ENCODE measurements at regions of chr20 and their contacts with region 1.

Region 1: GRCh38 chr20:64079273-64080012 is at the start of gene RGS19:
- DNase-seq: peak; percentile 75
- ATAC-seq: peak; percentile 40
- H3K4me3 Mint-ChIP-seq: peak within 1 kb of the TSS; percentile 80
- H3K27ac Mint-ChIP-seq: no peak within 1 kb of the TSS
- H3K4me1 Mint-ChIP-seq: peaks cover 29% of the 10 kb centered on the region
- H3K27me3 Mint-ChIP-seq: peaks cover 35% of the 10 kb centered on the region
- CTCF ChIP-seq: no peak
- total RNA-seq, gene RGS19: 13.8 to 15.9 TPM (median 15.1 TPM) in 3 replicates

Region 2: DNA sequence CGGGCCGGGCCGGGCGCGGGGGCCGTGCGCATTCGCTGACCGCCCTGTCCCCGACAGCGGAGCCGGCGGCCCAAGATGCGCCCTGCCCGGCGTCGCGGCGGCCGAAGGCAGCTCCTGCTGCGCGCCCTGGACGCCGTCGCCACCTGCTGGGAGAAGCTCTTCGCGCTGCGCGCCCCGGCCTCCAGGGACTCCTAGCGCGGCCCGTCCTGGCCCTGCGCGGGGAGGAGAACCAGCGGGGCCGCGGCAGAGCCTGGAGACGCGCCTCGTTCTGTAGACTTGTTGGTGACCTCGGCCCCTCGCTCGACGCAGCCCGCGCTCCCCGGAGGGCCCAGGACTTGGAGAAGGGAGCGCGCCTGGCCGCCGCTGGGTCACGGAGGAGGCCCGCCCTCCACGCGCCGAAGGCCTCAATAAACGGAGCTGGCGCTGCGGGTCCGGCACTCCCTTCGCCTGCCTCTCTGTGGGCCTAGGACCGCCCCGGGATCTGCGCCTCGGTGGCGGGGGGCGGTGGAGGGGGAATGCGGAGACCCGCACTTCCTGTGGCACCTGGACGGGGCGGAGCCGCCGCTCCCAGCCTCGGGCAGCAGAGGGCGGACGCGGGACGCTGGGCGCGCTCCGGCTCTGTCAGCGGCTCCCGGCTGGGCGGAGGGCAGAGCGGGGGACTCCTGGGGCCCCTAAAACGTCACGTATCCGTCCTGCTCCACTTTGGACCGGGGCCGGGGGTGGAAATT is 40.7 kb before region 1 on chr20:
- CTCF ChIA-PET with region 1: interaction called, 35 read pairs
- POLR2A ChIA-PET with region 1: no interaction called
- DNase-seq: peak; percentile 89
- ATAC-seq: peak; percentile 68
- H3K4me3 Mint-ChIP-seq: peak overlapping the region; percentile 54
- H3K27ac Mint-ChIP-seq: no peak overlapping the region
- H3K4me1 Mint-ChIP-seq: peaks cover 28% of the 10 kb centered on the region
- H3K27me3 Mint-ChIP-seq: peaks cover 43% of the 10 kb centered on the region
- CTCF ChIP-seq: peak; percentile 58

Region 3: GRCh38 chr20:64053841-64054661 is 25.4 kb before region 1 on chr20:
- CTCF ChIA-PET with region 1: interaction called, 17 read pairs
- POLR2A ChIA-PET with region 1: no interaction called
- DNase-seq: peak; percentile 56
- ATAC-seq: peak; percentile 20
- H3K4me3 Mint-ChIP-seq: no peak overlapping the region
- H3K27ac Mint-ChIP-seq: peak overlapping the region; percentile 74; the same call in 1 of the 2 replicates
- H3K4me1 Mint-ChIP-seq: peaks cover 22% of the 10 kb centered on the region
- H3K27me3 Mint-ChIP-seq: peaks cover 24% of the 10 kb centered on the region
- CTCF ChIP-seq: no peak

Region 4: DNA sequence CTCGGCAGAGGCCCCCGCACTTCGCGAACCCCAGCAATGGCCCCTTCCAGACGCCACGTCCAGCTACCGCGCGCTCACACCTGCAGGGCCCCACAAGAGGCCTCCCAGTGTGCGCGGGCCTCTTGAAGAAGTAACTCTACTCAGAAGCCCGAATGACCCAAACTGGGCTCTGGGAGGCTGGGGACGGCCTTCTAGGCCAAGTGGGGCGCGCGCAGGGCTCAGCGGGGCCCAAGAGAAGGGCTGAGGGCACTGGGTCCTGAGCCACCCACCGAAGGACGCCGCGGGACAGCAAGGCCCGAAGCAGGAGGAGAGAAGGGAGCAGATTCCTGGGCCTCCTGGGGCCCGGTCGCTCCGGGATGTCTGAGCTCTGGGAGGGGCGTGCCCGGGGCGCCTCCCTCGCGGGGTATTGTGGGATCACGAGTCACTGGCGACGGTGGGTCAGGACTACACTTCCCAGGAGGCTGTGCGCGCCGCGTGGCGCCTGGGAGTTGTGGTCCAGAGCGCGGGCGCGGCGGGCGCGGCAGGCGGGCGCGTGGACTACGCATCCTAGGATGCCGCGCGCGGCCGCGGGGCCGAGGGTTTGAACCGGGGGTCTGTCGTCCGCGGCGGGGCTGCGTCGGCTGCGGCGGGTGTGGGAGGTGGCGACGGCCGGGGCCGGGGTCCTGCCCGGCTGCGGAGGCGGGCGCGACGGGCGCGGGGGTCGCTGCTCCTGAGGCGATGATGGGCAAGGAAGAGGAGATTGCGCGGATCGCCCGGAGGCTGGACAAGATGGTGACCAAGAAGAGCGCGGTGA is 16.7 kb before region 1 on chr20 and contains the start of gene TCEA2:
- CTCF ChIA-PET with region 1: interaction called, 16 read pairs
- POLR2A ChIA-PET with region 1: interaction called, 4 read pairs
- DNase-seq: peak; percentile 95
- ATAC-seq: peak; percentile 84
- H3K4me3 Mint-ChIP-seq: peak within 1 kb of the TSS; percentile 82
- H3K27ac Mint-ChIP-seq: no peak within 1 kb of the TSS; the same call in 1 of the 2 replicates
- H3K4me1 Mint-ChIP-seq: peaks cover 31% of the 10 kb centered on the region
- H3K27me3 Mint-ChIP-seq: peaks cover 7% of the 10 kb centered on the region
- CTCF ChIP-seq: no peak
- total RNA-seq, gene TCEA2: 55.8 to 63.6 TPM (median 63.5 TPM) in 3 replicates

Region 5: DNA sequence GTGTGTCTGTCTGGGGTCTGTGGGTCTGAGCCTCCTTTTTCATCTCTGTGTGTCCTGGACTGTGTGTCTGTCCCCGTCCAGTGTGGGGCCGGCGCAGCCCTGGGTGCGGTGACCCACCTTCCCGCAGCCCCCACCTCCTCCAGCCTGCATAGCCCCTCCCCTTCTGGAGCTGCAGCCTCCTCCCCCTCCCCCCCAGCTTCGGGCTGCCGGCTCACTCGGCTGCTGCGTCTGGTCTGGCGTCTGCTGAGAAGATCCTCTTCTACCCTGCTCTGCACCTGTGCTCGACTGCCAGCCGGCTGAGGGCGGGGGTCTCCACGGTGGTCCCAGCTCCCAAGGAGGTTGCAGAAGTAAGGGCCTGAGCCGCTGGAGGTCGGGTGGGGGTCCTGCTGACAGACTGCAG is 12.3 kb after region 1 on chr20:
- CTCF ChIA-PET with region 1: interaction called, 12 read pairs
- POLR2A ChIA-PET with region 1: no interaction called
- DNase-seq: no peak
- ATAC-seq: peak; percentile 78
- H3K4me3 Mint-ChIP-seq: no peak overlapping the region
- H3K27ac Mint-ChIP-seq: no peak overlapping the region
- H3K4me1 Mint-ChIP-seq: peaks cover 7% of the 10 kb centered on the region
- H3K27me3 Mint-ChIP-seq: peaks cover 11% of the 10 kb centered on the region; the same call in 1 of the 2 replicates
- CTCF ChIP-seq: no peak

Region 6: DNA sequence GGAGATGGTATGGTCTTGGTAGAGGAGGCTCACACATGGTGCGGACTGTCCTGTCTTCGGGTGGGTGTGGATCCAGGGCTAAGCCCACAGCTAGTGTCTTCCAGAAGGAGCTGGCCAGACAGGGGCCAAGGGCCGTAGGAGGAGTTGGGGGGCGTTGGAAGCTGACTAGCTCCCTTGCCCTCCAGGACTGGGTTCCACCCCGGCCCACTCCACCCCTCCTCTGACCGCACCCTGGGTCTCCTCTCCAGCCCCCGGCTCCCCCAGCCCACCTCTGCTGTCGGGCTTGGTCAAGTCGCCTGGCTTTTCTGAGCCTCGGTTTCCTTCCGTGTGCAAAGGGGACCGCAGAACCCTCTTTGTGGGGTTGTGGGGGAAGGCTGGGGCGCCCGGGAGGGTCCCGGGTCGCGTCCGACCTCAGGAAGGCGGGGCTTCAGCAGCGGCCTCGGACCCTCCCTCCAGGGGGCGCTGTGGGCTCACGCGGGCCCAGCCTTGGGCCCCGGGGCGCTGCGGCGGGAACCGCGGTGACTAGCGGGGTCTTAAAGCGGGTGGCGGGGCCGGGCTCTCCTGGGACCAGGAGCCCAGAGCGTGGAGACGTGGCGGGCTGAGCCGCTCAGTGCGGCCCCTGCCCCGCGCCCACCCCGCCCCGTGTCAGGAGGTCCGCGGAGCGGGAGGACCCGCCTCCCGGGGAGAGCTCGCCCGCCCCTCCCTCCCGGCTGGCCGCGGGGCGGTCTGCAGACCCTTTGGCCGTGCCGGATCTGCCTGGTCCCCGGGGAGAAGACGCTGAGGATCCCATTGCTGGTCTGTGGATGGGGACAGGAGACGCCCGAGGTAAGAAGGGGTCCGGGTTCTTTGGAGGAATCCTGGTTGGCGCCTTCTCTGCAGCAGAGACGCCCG is 22.5 kb after region 1 on chr20:
- CTCF ChIA-PET with region 1: interaction called, 77 read pairs
- POLR2A ChIA-PET with region 1: no interaction called
- DNase-seq: peak; percentile 79
- ATAC-seq: peak; percentile 82
- H3K4me3 Mint-ChIP-seq: peak overlapping the region; percentile 74
- H3K27ac Mint-ChIP-seq: no peak overlapping the region
- H3K4me1 Mint-ChIP-seq: peaks cover 8% of the 10 kb centered on the region
- H3K27me3 Mint-ChIP-seq: peaks cover 22% of the 10 kb centered on the region
- CTCF ChIP-seq: peak; percentile 91

Region 7: DNA sequence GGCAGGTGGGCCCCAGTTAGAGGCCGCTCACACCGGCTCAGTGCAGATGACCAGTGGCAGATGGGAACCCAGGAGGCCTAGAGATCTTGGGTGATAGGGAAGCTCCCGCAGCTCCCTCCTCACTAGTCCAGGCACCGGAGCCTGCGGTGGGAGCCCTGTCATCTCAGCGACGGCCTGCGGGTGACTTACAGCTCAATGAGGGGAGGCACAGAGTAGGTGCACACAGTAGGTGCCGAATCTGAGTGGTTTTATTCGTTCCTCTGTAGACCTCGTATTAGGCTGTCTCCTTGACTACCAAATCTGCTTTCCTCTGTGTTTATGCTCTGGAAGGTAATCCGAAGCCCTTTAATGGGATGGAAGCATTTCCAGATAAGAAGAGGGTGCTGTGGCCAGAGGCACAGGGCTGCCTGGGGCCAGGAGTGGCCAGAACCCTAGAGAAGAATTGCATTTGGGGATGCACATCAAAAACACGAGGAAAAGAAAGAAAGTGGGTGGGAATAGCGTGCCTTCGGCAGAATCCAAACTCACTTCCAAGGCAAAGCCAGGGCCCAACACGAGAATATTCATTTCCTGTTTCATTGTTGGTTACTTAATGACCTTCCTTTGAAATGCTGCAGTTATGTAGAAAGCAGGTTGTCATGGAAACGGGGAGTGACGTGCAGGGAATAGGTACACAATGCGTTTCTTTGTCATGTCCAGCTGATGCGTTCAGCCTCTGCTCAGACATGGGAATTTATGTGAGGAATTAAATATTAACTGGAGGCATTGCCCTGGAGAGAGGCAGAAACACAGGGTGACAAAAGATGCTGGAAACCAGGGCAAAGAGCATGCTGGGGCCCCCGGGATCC is 109.5 kb after region 1 on chr20:
- CTCF ChIA-PET with region 1: no interaction called
- POLR2A ChIA-PET with region 1: no interaction called
- DNase-seq: peak; percentile 35
- ATAC-seq: peak; percentile 63
- H3K4me3 Mint-ChIP-seq: peak overlapping the region; percentile 40
- H3K27ac Mint-ChIP-seq: peak overlapping the region; percentile 92
- H3K4me1 Mint-ChIP-seq: peaks cover 47% of the 10 kb centered on the region
- H3K27me3 Mint-ChIP-seq: peaks cover 3% of the 10 kb centered on the region; the same call in 1 of the 2 replicates
- CTCF ChIP-seq: no peak

Measured in WTC11 (cell line).